GM12878 (cell line): ENCODE measurements at regions of chr2 and their contacts with region 1.

Region 1: DNA sequence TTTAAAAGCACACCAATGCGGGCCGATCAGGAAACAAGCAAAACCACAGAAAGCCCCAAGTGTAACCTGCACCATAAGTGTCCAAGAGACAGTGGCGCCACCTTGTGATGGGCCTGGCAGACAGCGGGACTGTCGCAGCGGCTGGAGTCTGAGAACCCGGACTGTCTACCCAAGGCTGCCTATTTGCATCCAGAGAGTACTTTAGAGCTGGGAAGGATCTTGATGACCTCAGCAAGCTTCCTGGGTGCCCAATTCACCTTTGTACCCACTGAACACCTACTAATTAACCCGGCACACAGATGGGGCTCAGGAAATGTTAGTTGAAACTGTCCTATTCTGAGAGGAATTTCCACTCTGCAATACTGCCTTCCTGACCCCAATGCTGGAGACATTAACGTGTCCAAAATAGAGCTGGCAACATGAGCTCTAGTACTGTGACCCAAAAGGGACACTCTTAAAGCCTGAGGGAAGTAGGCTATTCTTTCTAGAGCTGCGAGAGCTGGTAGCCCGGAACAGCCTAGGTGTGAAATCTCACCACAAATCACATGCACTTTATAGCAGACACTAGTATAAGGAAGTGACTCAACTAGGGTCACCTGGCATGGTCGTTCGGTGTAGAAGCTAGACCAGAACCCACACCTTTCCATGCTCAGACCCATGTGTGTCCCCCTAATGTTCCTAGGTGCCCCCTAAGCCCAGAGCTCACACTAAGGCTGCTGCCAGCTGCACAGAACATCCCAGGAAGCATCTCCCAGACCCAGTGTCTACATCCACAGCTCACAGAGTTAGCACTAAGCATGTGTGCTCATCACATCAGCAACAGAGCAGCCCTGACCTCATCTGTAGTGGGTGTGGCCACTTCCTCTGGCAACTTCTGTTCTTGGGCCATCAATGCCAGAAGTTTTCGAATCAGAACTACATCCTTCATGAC is 25.4 kb downstream of the POLR1A start:
- DNase-seq: peak; percentile 45
- ATAC-seq: peak; percentile 95
- H3K4me3 ChIP-seq: no peak overlapping the region
- H3K27ac ChIP-seq: peak overlapping the region; percentile 26; the same call in 1 of the 2 replicates
- H3K4me1 ChIP-seq: peaks cover 14% of the 10 kb centered on the region
- H3K27me3 ChIP-seq: no peaks in the 10 kb centered on the region
- CTCF ChIP-seq: peak; percentile 80 to 90 (median 82)
- EP300 ChIP-seq: no peak
- POLR2A ChIP-seq: no peak
- RAD21 ChIP-seq: peak; percentile 83

Region 2: GRCh38 chr2:85723707-85724360 is 356.4 kb before region 1 on chr2:
- CTCF ChIA-PET with region 1: interaction called, 20 read pairs
- POLR2A ChIA-PET with region 1: no interaction called
- RAD21 ChIA-PET with region 1: interaction called, 18 read pairs
- SMC1A ChIA-PET with region 1: interaction called, 15 read pairs
- in situ Hi-C with region 1: no loop called
- intact Hi-C with region 1: loop called (anchors 1 kb)
- DNase-seq: no peak
- ATAC-seq: no peak
- H3K4me3 ChIP-seq: no peak overlapping the region
- H3K27ac ChIP-seq: no peak overlapping the region
- H3K4me1 ChIP-seq: no peaks in the 10 kb centered on the region
- H3K27me3 ChIP-seq: peaks cover 0 to 2% of the 10 kb centered on the region in 2 experiments; a peak in 1 of 4 replicates
- CTCF ChIP-seq: no peak
- EP300 ChIP-seq: no peak
- POLR2A ChIP-seq: no peak
- RAD21 ChIP-seq: no peak

Region 3: GRCh38 chr2:85813982-85814801 is 266.1 kb before region 1 on chr2:
- CTCF ChIA-PET with region 1: interaction called, 458 read pairs
- POLR2A ChIA-PET with region 1: no interaction called
- RAD21 ChIA-PET with region 1: interaction called, 12 read pairs
- SMC1A ChIA-PET with region 1: interaction called, 20 read pairs
- in situ Hi-C with region 1: no loop called
- intact Hi-C with region 1: no loop called
- DNase-seq: peak; percentile 30
- ATAC-seq: peak; percentile 99
- H3K4me3 ChIP-seq: no peak overlapping the region
- H3K27ac ChIP-seq: no peak overlapping the region
- H3K4me1 ChIP-seq: no peaks in the 10 kb centered on the region
- H3K27me3 ChIP-seq: no peaks in the 10 kb centered on the region
- CTCF ChIP-seq: peak; percentile 94 to 98 (median 95); a peak in 5 of 6 replicates
- EP300 ChIP-seq: no peak
- POLR2A ChIP-seq: no peak
- RAD21 ChIP-seq: peak; percentile 94

Region 4: DNA sequence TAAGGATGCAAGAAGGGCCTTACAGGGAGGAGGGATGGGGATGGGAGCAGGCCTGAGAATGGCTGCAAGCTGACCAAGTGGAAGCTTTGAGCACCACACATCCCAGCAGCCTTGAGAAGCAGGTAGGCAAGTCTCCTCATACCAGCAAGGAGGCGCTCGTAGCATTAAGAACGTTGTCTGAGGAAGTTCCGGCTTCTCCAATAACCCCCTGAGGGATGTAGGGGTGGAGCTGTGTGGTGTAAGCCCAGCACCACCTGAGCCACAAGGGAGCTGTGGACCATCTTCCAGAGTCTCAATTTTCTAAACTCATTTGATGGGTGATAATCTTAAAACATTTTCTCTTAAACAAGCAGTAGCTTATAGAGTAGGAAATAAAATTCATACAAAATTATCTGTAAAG is 242.1 kb before region 1 on chr2:
- CTCF ChIA-PET with region 1: interaction called, 458 read pairs
- POLR2A ChIA-PET with region 1: no interaction called
- RAD21 ChIA-PET with region 1: interaction called, 6 read pairs
- SMC1A ChIA-PET with region 1: interaction called, 286 read pairs
- in situ Hi-C with region 1: no loop called
- intact Hi-C with region 1: no loop called
- DNase-seq: no peak
- ATAC-seq: no peak
- H3K4me3 ChIP-seq: no peak overlapping the region
- H3K27ac ChIP-seq: no peak overlapping the region
- H3K4me1 ChIP-seq: peaks cover 9% of the 10 kb centered on the region
- H3K27me3 ChIP-seq: no peaks in the 10 kb centered on the region
- CTCF ChIP-seq: no peak
- EP300 ChIP-seq: no peak
- POLR2A ChIP-seq: no peak
- RAD21 ChIP-seq: no peak

Region 5: DNA sequence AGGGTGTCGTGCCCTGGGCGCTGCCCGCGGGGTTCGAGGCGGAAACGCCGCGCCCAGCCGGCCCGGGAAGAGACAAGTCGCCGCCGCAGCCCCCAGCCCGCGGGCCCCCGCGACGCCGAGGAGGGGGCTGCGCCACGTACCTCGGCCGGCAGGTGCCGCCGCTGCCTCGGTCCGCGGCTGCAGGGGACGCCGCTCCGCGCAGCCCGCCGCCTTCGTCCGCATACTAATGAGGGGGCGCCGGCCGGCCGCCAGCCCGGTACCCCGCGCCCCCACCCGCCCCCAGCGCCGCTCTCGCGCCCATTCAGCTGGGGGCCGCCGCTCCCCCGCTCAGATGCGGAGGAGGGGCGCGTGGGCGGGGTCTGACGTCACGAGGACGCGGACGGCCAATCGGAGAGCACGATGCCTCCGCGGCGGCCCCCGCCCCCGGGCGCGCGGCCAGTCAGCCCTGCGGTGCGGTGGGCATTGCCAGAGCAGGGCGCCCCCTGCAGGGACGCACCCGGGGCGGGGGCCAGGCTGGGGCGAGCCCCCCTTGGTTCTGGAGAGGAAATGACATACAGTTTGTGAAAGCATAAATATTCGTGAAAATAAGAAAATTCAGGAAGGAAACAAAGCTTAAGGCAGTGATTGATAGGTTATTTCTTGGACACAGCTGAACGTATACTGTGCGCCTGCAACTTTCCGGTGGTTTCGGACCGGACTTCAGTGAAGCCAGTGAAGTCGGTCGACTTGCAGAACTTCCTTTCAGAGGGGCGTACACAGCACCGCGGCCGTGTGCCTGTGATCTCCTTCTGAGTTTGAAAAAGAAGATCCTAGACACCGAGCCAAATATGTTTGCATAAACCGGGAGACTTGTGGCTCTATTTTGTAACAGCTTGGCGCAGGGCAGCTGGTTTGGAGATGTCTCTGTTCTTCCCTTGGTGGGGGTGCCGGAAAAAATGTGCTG is 191.3 kb before region 1 on chr2 and contains the start of gene ST3GAL5:
- CTCF ChIA-PET with region 1: interaction called, 154 read pairs
- POLR2A ChIA-PET with region 1: interaction called, 11 read pairs
- RAD21 ChIA-PET with region 1: interaction called, 148 read pairs
- SMC1A ChIA-PET with region 1: interaction called, 114 read pairs
- in situ Hi-C with region 1: no loop called
- intact Hi-C with region 1: loop called (anchors 2 kb)
- DNase-seq: peak; percentile 51
- ATAC-seq: peak; percentile 87
- H3K4me3 ChIP-seq: peak within 1 kb of the TSS; percentile 65
- H3K27ac ChIP-seq: peak within 1 kb of the TSS; percentile 4; the same call in 1 of the 2 replicates
- H3K4me1 ChIP-seq: peaks cover 13% of the 10 kb centered on the region; the same call in 1 of the 2 replicates
- H3K27me3 ChIP-seq: no peaks in the 10 kb centered on the region; a peak in 1 of 4 replicates
- CTCF ChIP-seq: peak; percentile 79 to 84 (median 81)
- EP300 ChIP-seq: peak; percentile 28 to 57; a peak in 1 of 4 replicates
- POLR2A ChIP-seq: peak; percentile 39; the same call in 1 of the 2 replicates
- RAD21 ChIP-seq: peak; percentile 71
- polyA plus RNA-seq, gene ST3GAL5: 5.6 to 7.5 TPM

Region 6: DNA sequence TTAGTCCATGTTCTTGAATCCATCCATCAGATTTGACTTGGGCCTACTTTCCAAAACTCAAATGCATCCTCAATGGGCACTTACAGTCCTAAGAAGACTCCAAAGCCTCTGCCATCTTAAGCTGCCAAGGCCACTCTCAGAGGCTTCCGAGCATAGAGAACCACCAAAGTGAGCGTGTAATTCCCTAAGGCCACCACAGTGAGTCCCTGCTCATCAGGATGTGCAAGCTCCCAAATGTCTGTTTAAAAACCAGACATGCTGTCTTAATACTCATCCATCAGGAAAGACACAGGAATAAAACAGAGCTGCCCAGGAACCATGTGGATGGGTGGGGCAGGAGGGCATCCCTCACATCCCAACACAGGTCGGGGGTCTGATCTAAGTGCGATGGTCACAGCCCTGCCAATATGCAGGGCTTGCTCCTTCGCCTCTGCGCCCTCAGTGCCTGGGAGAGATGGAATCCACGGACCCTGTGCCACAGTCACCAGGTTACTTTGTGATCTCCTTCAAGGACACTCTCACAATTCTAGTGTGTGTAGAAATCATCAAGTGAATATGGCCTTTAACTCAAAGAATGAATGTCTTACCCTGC is 54.9 kb before region 1 on chr2:
- CTCF ChIA-PET with region 1: interaction called, 43 read pairs
- POLR2A ChIA-PET with region 1: no interaction called
- RAD21 ChIA-PET with region 1: interaction called, 16 read pairs
- SMC1A ChIA-PET with region 1: interaction called, 45 read pairs
- in situ Hi-C with region 1: no loop called
- intact Hi-C with region 1: no loop called
- DNase-seq: no peak
- ATAC-seq: no peak
- H3K4me3 ChIP-seq: no peak overlapping the region
- H3K27ac ChIP-seq: no peak overlapping the region
- H3K4me1 ChIP-seq: no peaks in the 10 kb centered on the region
- H3K27me3 ChIP-seq: no peaks in the 10 kb centered on the region
- CTCF ChIP-seq: no peak
- EP300 ChIP-seq: no peak
- POLR2A ChIP-seq: no peak
- RAD21 ChIP-seq: no peak

Region 7: DNA sequence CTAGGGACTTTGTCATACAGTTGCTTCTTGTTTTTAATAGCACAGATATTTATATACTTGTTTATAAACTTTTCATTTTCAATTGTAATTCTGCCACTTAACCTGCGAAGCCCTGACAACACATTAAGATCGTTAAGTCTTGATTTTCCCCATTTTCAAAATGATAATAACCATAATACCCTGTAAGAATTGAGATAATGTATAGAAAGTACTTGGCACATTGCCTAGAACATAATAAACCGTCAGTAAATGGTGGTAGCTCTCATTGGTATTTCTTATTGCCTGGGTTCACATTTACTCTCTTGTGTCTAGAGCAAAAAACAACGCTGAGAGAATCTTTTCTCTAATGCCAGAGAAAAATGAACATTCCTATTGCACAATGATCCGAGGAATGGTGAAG is 44.4 kb after region 1 on chr2:
- CTCF ChIA-PET with region 1: interaction called, 8 read pairs
- POLR2A ChIA-PET with region 1: no interaction called
- RAD21 ChIA-PET with region 1: interaction called, 3 read pairs
- SMC1A ChIA-PET with region 1: interaction called, 4 read pairs
- in situ Hi-C with region 1: loop called (anchors 5 kb)
- intact Hi-C with region 1: no loop called
- DNase-seq: no peak
- ATAC-seq: no peak
- H3K4me3 ChIP-seq: no peak overlapping the region
- H3K27ac ChIP-seq: no peak overlapping the region
- H3K4me1 ChIP-seq: peaks cover 4% of the 10 kb centered on the region; the same call in 1 of the 2 replicates
- H3K27me3 ChIP-seq: no peaks in the 10 kb centered on the region
- CTCF ChIP-seq: no peak
- EP300 ChIP-seq: no peak
- POLR2A ChIP-seq: no peak
- RAD21 ChIP-seq: no peak